Calu3 (cell line): ENCODE measurements at regions of chr10 and their contacts with region 1.

Region 1: GRCh38 chr10:65365878-65366277 is 1560.0 kb upstream of the LRRTM3 start:
- DNase-seq: no peak
- H3K4me3 Mint-ChIP-seq: no peak overlapping the region
- H3K27ac Mint-ChIP-seq: no peak overlapping the region
- H3K4me1 Mint-ChIP-seq: no peaks in the 10 kb centered on the region
- H3K27me3 Mint-ChIP-seq: no peaks in the 10 kb centered on the region
- CTCF ChIP-seq: no peak

Region 2: GRCh38 chr10:65284495-65285041 is 81.3 kb before region 1 on chr10:
- CTCF ChIA-PET with region 1: no interaction called
- intact Hi-C with region 1: no loop called
- DNase-seq: no peak
- H3K4me3 Mint-ChIP-seq: no peak overlapping the region
- H3K27ac Mint-ChIP-seq: no peak overlapping the region
- H3K4me1 Mint-ChIP-seq: no peaks in the 10 kb centered on the region
- H3K27me3 Mint-ChIP-seq: no peaks in the 10 kb centered on the region
- CTCF ChIP-seq: no peak

Region 3: DNA sequence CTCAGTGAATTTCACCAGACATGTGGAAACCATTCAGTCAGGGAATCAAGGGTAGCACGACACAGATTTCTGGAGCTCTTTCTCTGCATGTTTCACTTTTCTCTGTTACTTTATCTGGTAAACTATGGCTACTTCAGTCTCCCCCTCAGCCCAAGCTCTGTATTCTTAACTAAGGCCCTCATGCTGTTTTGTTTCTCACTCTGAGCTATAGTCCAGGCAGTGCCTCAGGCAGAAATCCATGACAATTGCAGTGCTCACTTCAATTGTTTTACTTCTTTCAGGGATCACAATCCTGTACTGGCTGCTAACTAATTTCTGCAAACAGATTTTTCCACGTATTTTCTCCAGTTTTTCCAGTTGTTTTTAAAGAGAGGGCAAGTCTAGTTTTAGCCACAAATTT is 40.0 kb before region 1 on chr10:
- CTCF ChIA-PET with region 1: no interaction called
- intact Hi-C with region 1: no loop called
- DNase-seq: no peak
- H3K4me3 Mint-ChIP-seq: no peak overlapping the region
- H3K27ac Mint-ChIP-seq: no peak overlapping the region
- H3K4me1 Mint-ChIP-seq: no peaks in the 10 kb centered on the region
- H3K27me3 Mint-ChIP-seq: no peaks in the 10 kb centered on the region
- CTCF ChIP-seq: no peak

Region 4: DNA sequence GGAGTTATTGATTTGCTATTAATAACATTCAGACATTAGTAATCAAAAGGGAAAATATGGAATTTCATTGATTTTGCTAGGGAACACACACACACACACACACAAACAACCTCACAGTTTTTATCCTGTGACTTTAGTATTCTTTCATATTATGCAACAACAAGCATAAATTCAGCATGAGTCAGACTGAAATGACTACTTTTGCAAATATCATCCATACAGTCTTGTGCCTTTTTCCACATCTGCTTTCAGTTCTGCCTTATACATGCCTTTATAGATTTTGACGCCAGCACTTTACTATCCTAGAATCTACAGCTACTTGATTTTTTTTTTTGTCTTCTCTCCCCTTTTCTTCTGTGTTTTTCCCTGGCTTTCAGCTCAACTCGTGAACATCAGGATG is 584.2 kb after region 1 on chr10:
- CTCF ChIA-PET with region 1: no interaction called
- intact Hi-C with region 1: loop called (anchors 10 kb)
- DNase-seq: no peak
- H3K4me3 Mint-ChIP-seq: no peak overlapping the region
- H3K27ac Mint-ChIP-seq: no peak overlapping the region
- H3K4me1 Mint-ChIP-seq: peaks cover 19% of the 10 kb centered on the region
- H3K27me3 Mint-ChIP-seq: no peaks in the 10 kb centered on the region
- CTCF ChIP-seq: no peak